ENCODE measurements at regions of chr1 and their contacts with region 1.

Region 1: DNA sequence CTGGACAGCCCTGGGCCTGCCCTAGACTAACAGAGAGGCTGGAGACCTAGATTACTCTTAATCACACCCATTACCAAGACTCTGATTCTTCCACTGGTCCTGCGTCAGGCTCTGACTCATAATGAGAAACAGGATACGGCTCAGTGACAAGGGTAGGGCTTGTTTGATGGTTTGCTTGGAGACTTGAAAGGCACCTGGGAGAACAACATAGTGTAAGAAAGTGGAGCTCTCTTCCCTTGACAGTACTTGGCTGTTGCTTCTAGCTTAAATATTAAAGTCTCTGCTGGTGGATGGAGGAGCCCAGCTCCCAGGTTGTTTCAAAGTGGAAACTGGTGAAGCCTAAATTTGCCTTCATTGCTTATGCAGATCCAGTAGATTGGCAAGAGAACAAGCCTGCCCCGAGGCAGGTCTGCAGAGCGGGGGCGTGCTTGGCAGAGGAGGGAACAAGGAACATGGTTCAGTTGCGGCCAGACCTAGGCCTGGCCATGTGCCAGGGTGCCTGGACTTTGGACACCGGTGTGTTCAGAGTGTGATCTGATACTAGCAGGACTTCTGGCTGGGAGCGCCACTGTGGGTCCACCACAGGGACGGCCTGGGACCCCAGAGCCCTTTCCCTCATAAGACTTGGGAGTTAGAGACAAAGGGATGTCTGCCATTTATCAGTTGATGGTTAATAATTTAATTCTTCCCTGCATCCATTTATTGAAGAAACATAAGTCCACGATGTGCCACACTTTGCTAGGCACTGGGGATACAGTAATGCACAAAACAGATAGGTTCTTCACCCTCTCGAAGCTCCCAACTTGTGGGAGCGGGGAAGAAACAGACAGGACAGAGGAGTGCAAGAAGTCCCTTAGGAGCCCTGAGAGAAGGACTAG is 480.8 kb downstream of the CAMTA1 start:
- DNase-seq: peak; percentile 91
- H3K4me3 Mint-ChIP-seq: peak overlapping the region; percentile 63
- H3K27ac Mint-ChIP-seq: peak overlapping the region; percentile 90
- H3K4me1 Mint-ChIP-seq: peaks cover 30% of the 10 kb centered on the region
- H3K27me3 Mint-ChIP-seq: no peaks in the 10 kb centered on the region
- CTCF ChIP-seq: no peak

Region 2: DNA sequence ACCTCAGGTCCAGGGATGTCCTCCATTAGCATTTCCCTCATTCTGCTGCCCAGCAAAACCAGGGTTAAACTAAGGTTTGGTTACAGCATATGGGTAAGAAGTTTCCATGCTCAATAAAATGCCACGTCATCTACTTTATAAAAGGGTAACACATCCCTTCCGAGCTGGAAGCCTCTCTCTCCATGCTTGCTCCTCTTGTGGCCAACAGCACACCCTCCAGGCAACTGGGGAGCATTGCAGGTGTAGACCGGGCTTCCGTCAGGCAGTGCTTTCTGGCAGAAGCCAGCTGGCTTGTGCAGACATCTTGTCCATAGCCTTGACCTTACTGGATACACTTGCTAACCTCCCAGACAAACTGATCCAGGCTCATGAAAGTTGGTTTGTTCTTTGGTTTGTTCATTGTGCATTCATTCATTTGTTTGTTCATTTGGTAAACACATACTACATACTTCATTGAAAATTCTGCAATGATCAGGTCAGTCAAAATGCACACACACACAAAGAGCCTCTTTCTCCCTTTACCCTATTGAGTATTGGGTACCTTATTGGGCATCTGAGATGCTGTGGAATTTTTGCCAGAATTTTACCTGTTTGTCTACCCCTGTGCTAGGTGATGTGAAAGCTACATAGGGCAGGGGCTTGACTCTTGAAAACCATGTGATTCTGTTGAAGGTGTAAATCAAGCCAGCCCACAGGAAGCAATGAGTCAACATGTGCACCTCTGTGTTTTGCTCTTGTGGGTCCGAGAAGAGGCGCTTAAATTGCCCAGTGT is 57.9 kb before region 1 on chr1:
- CTCF ChIA-PET with region 1: no interaction called
- intact Hi-C with region 1: no loop called
- DNase-seq: peak; percentile 73
- H3K4me3 Mint-ChIP-seq: no peak overlapping the region
- H3K27ac Mint-ChIP-seq: no peak overlapping the region
- H3K4me1 Mint-ChIP-seq: peaks cover 7% of the 10 kb centered on the region
- H3K27me3 Mint-ChIP-seq: peaks cover 48% of the 10 kb centered on the region
- CTCF ChIP-seq: peak; percentile 64

Region 3: DNA sequence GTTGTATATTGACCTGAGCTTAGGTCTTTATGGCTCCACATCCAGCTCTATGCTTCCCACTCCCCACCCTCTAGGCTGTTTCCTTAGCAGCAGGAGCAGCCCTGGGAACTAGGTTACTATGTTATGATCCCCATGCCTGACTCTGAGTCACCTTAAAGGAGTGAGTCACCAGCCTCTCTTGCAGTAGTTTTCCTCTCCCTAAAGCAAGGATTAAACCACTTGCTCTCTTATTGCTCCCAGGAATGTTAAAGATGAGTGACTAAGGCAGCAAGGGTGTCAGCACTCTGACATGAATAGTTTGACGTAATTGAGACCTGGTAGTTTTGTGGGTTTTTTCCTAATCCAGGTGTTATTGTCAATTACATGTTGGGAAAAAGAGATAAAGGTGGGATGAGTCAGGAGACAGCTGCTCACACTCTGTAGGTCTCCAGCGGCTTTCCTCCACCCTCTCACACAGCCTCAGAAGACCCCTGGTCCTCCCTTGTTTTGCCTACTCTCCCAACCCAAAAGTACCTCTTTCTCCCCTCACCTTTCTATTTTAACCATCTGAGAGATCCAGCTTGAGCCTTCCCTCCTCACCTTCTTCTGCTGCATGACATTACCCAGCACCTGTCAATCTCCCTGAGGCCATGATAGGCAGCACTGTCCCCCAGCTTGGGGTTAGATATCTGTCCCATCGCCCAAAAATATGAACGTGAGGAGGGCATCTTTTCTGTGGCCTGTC is 136.0 kb after region 1 on chr1:
- CTCF ChIA-PET with region 1: no interaction called
- intact Hi-C with region 1: loop called (anchors 5 kb)
- DNase-seq: peak; percentile 59
- H3K4me3 Mint-ChIP-seq: no peak overlapping the region
- H3K27ac Mint-ChIP-seq: peak overlapping the region; percentile 89
- H3K4me1 Mint-ChIP-seq: peaks cover 14% of the 10 kb centered on the region
- H3K27me3 Mint-ChIP-seq: no peaks in the 10 kb centered on the region
- CTCF ChIP-seq: no peak